Activated CD4-positive, alpha-beta T cell treated with anti-CD3 and anti-CD28 coated beads for 36 hours (primary cell): ENCODE measurements at regions of chr5 and their contacts with region 1.

Region 1: DNA sequence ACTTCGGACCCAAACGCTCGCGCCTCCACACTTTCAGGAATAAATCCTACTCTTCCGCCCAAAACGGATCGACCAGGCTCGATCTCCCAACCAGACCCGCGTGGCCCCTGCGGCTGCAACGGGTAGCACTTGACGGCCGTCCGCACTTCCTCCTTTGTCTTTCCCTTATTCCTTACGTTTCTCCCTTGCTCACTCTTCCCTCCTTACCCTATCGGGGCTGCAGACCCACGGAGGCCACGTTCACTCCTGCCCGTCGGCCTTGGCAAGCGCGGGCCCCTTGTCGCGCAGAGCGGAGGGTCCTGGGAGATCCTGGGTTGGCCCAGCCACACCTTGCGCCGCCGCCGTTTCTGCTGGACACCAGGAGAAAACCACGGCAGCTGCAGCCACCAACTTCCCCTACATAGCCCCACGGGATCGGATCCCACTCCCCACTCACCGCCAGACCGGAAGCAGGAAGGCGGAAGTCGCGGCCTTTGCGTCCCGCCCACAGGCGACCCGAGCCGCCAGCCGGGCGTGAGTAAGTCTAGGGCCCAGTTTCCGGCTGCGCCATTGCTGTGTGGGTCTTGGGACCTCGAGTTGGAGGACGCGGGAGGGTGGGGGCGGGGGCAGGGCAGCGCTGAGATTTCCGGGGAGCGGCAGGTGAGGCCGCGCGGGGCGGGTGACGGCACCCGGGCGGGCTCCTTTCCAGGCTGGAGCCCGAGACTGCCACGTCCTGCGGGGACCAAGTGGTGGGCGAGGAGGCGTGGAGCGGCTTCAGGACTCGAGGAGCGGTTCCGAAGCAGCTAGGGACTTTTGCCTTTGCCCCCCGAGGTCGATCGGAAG is at the start of gene SMIM15:
- DNase-seq: peak; percentile 91
- ATAC-seq: peak; percentile 94
- H3K4me3 Mint-ChIP-seq: peak within 1 kb of the TSS; percentile 88
- H3K27ac Mint-ChIP-seq: peak within 1 kb of the TSS; percentile 95
- H3K4me1 Mint-ChIP-seq: peaks cover 35% of the 10 kb centered on the region
- H3K27me3 Mint-ChIP-seq: no peaks in the 10 kb centered on the region
- total RNA-seq, gene SMIM15: 73.5 to 84.0 TPM

Region 2: GRCh38 chr5:60699530-60700382 is 462.5 kb before region 1 on chr5 and contains the start of gene DEPDC1B:
- CTCF ChIA-PET with region 1: no interaction called
- POLR2A ChIA-PET with region 1: no interaction called
- intact Hi-C with region 1: loop called in 1 of 2 experiments (anchors 2 kb)
- DNase-seq: peak; percentile 94
- ATAC-seq: peak; percentile 97
- H3K4me3 Mint-ChIP-seq: peak within 1 kb of the TSS; percentile 84
- H3K27ac Mint-ChIP-seq: peak within 1 kb of the TSS; percentile 88
- H3K4me1 Mint-ChIP-seq: peaks cover 16% of the 10 kb centered on the region
- H3K27me3 Mint-ChIP-seq: peaks cover 2% of the 10 kb centered on the region
- total RNA-seq, gene DEPDC1B: 34.2 to 40.3 TPM

Region 3: GRCh38 chr5:60972231-60972630 is 190.0 kb before region 1 on chr5:
- CTCF ChIA-PET with region 1: no interaction called
- POLR2A ChIA-PET with region 1: no interaction called
- intact Hi-C with region 1: loop called (anchors 5 kb)
- DNase-seq: peak; percentile 75
- ATAC-seq: peak; percentile 100
- H3K4me3 Mint-ChIP-seq: no peak overlapping the region
- H3K27ac Mint-ChIP-seq: peak overlapping the region; percentile 6
- H3K4me1 Mint-ChIP-seq: peaks cover 19% of the 10 kb centered on the region
- H3K27me3 Mint-ChIP-seq: no peaks in the 10 kb centered on the region

Region 4: GRCh38 chr5:61055434-61056006 is 106.7 kb before region 1 on chr5:
- CTCF ChIA-PET with region 1: no interaction called
- POLR2A ChIA-PET with region 1: no interaction called
- intact Hi-C with region 1: loop called in 1 of 2 experiments (anchors 5 kb)
- DNase-seq: no peak
- ATAC-seq: peak; percentile 49
- H3K4me3 Mint-ChIP-seq: no peak overlapping the region
- H3K27ac Mint-ChIP-seq: no peak overlapping the region
- H3K4me1 Mint-ChIP-seq: peaks cover 4% of the 10 kb centered on the region
- H3K27me3 Mint-ChIP-seq: no peaks in the 10 kb centered on the region

Region 5: DNA sequence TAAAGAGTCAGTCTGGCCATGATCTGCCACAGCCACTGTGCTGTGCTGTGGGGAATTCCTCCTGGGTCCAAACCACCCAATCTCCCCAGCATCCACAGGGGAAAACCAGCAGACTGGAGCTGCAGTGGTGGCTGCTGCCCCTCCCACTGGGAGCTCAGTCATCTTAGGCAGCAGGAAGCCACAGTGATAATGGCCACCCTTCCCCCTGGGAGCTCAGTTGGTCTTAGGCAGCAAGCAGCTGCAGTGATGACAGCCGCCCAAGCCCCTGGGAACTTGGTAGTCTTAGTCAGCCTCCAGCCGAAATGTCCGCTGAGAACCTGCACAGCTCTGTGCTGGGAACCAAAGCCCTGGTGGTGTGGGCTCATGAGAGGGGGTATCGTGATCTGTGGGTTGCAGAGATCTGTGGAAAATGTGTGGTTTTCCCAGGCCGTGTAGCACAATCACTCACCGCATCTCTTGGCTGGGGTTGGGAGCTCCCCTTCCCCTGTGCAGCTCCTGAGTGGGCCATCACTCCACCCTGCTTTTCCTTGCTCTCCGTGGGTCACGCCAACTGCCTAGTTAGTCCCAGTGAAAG is 38.4 kb after region 1 on chr5:
- CTCF ChIA-PET with region 1: no interaction called
- POLR2A ChIA-PET with region 1: no interaction called
- intact Hi-C with region 1: loop called (anchors 1 kb)
- DNase-seq: no peak
- ATAC-seq: no peak
- H3K4me3 Mint-ChIP-seq: no peak overlapping the region
- H3K27ac Mint-ChIP-seq: no peak overlapping the region
- H3K4me1 Mint-ChIP-seq: peaks cover 14% of the 10 kb centered on the region
- H3K27me3 Mint-ChIP-seq: peaks cover 39% of the 10 kb centered on the region

Region 6: DNA sequence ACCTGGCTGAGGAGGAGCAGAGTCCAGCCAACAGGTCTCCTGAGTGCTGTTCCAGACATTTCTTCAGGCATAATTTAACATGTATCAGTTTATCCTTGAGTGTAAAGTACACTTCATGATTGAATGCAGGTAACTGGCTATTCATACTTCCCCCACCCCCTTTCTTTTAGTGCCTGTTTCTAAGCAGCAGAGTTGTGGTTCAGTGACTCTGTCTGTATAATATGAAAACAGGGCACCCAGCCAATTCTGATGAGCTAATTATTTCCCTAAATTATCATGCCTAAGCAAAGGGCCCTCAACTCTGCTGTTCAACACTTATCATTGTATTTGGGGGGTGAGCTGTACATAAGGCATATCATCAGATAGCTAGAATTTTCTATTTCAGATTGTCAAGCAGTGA is 118.0 kb after region 1 on chr5:
- CTCF ChIA-PET with region 1: no interaction called
- POLR2A ChIA-PET with region 1: no interaction called
- intact Hi-C with region 1: loop called (anchors 2 to 5 kb)
- DNase-seq: peak; percentile 35
- ATAC-seq: peak; percentile 39
- H3K4me3 Mint-ChIP-seq: no peak overlapping the region
- H3K27ac Mint-ChIP-seq: no peak overlapping the region
- H3K4me1 Mint-ChIP-seq: peaks cover 41% of the 10 kb centered on the region
- H3K27me3 Mint-ChIP-seq: no peaks in the 10 kb centered on the region

Region 7: DNA sequence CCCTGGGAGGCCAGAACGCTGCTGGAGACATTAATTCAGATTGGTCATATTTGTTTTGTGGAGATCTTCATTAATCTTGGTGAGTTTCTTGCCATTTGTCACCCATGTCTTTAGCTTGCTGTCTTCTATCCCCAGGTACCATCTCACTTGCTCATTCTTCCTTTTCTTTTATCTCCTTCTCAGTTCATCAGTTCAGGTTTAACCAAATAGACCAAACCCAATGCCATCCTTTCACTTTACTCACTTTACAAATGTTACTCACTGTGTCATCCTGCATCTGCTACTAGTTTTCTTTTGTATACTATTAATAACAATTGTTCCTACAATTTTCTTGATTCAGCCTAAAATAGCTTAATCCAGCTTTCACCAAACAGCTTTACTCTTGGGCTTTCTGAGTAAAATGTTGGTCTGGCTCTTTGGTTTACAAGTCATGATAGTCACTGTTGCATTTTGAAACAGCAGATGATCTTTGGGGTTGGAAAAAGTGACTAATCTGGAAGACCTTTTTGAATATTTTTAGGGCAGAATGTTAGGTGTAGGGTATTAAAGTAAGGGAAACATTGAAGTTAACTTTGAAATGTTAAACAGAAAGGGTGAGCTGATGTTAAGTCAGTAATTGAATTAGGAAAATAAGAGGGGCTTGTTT is 416.8 kb after region 1 on chr5:
- CTCF ChIA-PET with region 1: no interaction called
- POLR2A ChIA-PET with region 1: no interaction called
- intact Hi-C with region 1: loop called in 1 of 2 experiments (anchors 2 kb)
- DNase-seq: no peak
- ATAC-seq: peak; percentile 87
- H3K4me3 Mint-ChIP-seq: no peak overlapping the region
- H3K27ac Mint-ChIP-seq: no peak overlapping the region
- H3K4me1 Mint-ChIP-seq: no peaks in the 10 kb centered on the region
- H3K27me3 Mint-ChIP-seq: peaks cover 4% of the 10 kb centered on the region